H1 (cell line): ENCODE measurements at regions of chr1 and their contacts with region 1.

Region 1: DNA sequence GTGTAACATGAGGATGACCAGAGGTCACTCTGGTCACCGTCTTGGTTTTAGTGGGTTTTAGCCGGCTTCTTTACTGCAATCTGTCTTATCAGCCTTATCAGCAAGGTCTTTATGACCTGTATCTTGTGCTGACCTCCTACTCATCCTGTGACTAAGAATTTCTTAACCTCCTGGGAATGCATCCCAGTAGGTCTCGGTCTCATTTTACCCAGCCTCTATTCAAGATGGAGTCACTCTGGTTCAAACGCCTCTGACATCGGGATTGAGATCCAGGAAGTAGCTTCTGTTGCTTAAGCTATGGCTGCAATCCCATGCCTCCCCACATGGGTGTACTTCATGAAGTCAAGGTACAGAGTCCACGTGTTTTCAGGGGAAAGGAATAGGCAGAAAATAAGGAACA is 19.9 kb downstream of the FMN2 start:
- DNase-seq: no peak
- H3K4me3 ChIP-seq: no peak overlapping the region
- H3K27ac ChIP-seq: no peak overlapping the region
- H3K4me1 ChIP-seq: peaks cover 0 to 5% (median 2%) of the 10 kb centered on the region in 4 experiments; a peak in 1 of 7 replicates
- H3K27me3 ChIP-seq: no peaks in the 10 kb centered on the region
- CTCF ChIP-seq: peak in 1 of 3 experiments; percentile 20; a peak in 1 of 4 replicates
- EP300 ChIP-seq: no peak
- POLR2A ChIP-seq: no peak
- RAD21 ChIP-seq: no peak

Region 2: GRCh38 chr1:239987103-239987745 is 124.3 kb before region 1 on chr1:
- CTCF ChIA-PET with region 1: no interaction called
- POLR2A ChIA-PET with region 1: no interaction called
- DNase-seq: no peak
- H3K4me3 ChIP-seq: no peak overlapping the region
- H3K27ac ChIP-seq: no peak overlapping the region
- H3K4me1 ChIP-seq: no peaks in the 10 kb centered on the region
- H3K27me3 ChIP-seq: no peaks in the 10 kb centered on the region
- CTCF ChIP-seq: peak in 2 of 3 experiments; percentile 42 to 51; a peak in 3 of 4 replicates
- EP300 ChIP-seq: no peak
- POLR2A ChIP-seq: no peak
- RAD21 ChIP-seq: peak; percentile 69 to 71

Region 3: DNA sequence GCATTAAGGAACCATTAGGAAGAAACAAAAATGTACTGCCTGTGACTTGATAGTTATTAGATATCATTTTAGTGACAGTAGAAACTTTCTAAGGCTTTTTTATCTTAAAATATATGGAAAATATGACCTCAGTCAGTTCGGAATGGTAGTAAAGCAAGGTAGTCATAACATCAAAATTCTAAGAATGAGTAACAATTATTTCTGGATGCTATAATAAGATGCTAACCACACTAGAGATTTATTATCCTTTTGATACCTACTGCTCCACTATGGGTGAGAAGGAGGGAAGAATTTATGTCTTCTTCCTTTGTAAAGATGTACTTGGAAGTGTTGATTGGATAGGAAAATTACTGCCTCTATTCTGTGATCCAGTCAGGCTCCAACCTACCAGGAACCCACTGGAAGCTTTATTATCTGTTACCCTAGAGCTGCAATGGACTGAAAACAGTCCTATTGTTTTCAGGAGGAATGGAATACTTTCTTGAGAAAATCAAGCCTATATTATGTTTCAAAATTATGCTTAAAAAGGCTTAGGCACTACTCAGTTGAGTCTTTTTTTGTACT is 11.1 kb before region 1 on chr1:
- CTCF ChIA-PET with region 1: interaction called, 19 read pairs
- POLR2A ChIA-PET with region 1: no interaction called
- DNase-seq: no peak
- H3K4me3 ChIP-seq: no peak overlapping the region
- H3K27ac ChIP-seq: no peak overlapping the region
- H3K4me1 ChIP-seq: peaks cover 2 to 7% (median 5%) of the 10 kb centered on the region in 4 experiments; a peak in 4 of 7 replicates
- H3K27me3 ChIP-seq: no peaks in the 10 kb centered on the region
- CTCF ChIP-seq: no peak
- EP300 ChIP-seq: no peak
- POLR2A ChIP-seq: no peak
- RAD21 ChIP-seq: no peak